ENCODE measurements at regions of chr6 and their contacts with region 1.

Region 1: GRCh38 chr6:13914351-13914750 is 10.4 kb upstream of the RNF182 start:
- DNase-seq: peak; percentile 8
- ATAC-seq: no peak
- H3K4me3 ChIP-seq: no peak overlapping the region
- H3K27ac ChIP-seq: no peak overlapping the region
- H3K4me1 ChIP-seq: no peaks in the 10 kb centered on the region; the same call in 1 of the 2 replicates
- H3K27me3 ChIP-seq: peaks cover 2% of the 10 kb centered on the region; the same call in 1 of the 2 replicates
- CTCF ChIP-seq: no peak
- POLR2A ChIP-seq: no peak
- RAD21 ChIP-seq: no peak

Region 2: GRCh38 chr6:13881621-13882225 is 32.6 kb before region 1 on chr6:
- CTCF ChIA-PET with region 1: no interaction called
- POLR2A ChIA-PET with region 1: no interaction called
- dilution Hi-C with region 1: no loop called
- in situ Hi-C with region 1: no loop called
- intact Hi-C with region 1: no loop called
- DNase-seq: no peak
- ATAC-seq: no peak
- H3K4me3 ChIP-seq: no peak overlapping the region
- H3K27ac ChIP-seq: no peak overlapping the region
- H3K4me1 ChIP-seq: peaks cover 3% of the 10 kb centered on the region; the same call in 1 of the 2 replicates
- H3K27me3 ChIP-seq: peaks cover 3% of the 10 kb centered on the region; the same call in 1 of the 2 replicates
- CTCF ChIP-seq: no peak
- POLR2A ChIP-seq: no peak
- RAD21 ChIP-seq: no peak

Region 3: DNA sequence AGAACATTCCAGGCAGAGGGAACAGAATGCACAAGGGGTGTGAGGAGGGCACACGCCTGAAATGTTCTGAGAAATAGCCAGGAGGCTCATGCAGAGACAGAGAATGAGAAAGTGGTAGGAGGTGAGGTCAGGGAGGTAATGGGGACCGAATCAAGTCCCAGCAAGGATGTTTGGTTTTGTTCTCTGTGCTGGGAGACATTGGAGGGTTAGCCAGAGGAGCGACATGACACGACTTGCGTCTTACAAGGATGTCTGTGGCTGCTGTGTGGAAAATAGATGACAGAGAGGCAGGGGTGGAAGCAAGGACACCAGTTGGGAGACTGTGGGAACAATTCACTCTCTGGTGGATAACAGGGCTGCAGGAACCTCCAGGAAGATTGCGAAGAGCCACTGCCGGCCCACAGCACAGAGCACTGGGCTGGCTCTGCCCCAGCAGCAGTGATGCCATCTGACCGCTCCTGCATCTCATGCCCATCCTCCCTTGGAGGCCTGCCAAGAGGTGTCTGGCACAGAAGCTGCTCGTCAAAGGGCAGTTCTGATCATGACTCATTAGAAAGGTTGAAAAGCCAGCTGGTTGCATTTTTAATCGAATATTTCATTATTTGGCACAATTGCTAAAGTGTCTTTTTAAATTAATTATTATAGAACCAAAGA is 145.6 kb after region 1 on chr6:
- CTCF ChIA-PET with region 1: interaction called, 88 read pairs
- POLR2A ChIA-PET with region 1: no interaction called
- dilution Hi-C with region 1: no loop called
- in situ Hi-C with region 1: loop called (anchors 5 kb)
- intact Hi-C with region 1: no loop called
- DNase-seq: no peak
- ATAC-seq: no peak
- H3K4me3 ChIP-seq: no peak overlapping the region
- H3K27ac ChIP-seq: no peak overlapping the region
- H3K4me1 ChIP-seq: no peaks in the 10 kb centered on the region
- H3K27me3 ChIP-seq: peaks cover 8% of the 10 kb centered on the region
- CTCF ChIP-seq: no peak
- POLR2A ChIP-seq: no peak
- RAD21 ChIP-seq: no peak

Region 4: DNA sequence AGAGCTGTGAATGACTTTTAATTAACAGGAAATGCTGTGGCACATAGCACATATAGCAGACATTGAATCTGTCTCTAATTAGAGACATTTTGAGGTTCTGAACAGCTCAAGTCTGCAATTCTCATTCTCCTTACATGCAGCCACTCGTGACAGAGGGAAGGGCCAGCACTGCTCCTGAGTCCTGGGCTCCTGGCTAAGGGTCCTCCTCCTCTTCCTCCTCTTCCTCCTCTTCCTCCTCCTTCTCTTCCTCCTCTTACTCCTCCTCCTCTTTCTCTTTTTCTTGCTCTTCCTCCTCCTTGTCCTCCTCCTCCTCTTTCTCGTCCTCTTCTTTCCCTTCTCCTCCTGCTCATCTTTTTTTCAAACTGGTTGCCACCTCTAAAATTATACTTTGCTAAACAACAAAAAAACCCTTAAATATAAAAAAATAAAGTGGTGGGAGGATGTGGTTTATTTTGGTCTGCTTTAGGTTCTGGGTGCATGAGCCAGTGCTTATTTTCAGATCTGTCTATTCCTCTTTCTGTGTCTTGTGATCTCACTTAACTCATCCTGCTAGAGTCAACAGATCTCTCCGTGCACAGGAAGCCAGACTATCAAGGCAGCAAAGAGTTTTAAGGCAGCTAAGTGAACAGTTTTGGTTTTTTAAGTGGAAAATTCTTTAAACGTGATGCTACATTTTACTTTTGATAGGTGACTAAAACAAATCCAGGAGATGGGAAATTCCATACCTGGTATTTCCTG is 362.5 kb after region 1 on chr6:
- CTCF ChIA-PET with region 1: no interaction called
- POLR2A ChIA-PET with region 1: no interaction called
- dilution Hi-C with region 1: no loop called
- in situ Hi-C with region 1: no loop called
- intact Hi-C with region 1: no loop called
- DNase-seq: peak; percentile 63
- ATAC-seq: no peak
- H3K4me3 ChIP-seq: no peak overlapping the region
- H3K27ac ChIP-seq: no peak overlapping the region
- H3K4me1 ChIP-seq: no peaks in the 10 kb centered on the region
- H3K27me3 ChIP-seq: peaks cover 4% of the 10 kb centered on the region; the same call in 1 of the 2 replicates
- CTCF ChIP-seq: no peak
- POLR2A ChIP-seq: no peak
- RAD21 ChIP-seq: no peak